ENCODE measurements at regions of chr10 and their contacts with region 1.

Region 1: GRCh38 chr10:71713135-71714030 is 6.2 kb downstream of the C10orf105 start:
- DNase-seq: peak in 2 of 9 donors; percentile 40 to 41
- ATAC-seq: peak; percentile 47
- H3K4me3 ChIP-seq: peak overlapping the region; percentile 9
- H3K4me3 Mint-ChIP-seq: peak overlapping the region; percentile 73 to 86 (median 81)
- H3K27ac ChIP-seq: peak overlapping the region; percentile 91
- H3K27ac Mint-ChIP-seq: peak overlapping the region; percentile 97 to 100 (median 98)
- H3K4me1 ChIP-seq: peaks cover 45 to 63% of the 10 kb centered on the region in 2 donors
- H3K4me1 Mint-ChIP-seq: peaks cover 41 to 86% (median 73%) of the 10 kb centered on the region in 7 donors
- H3K27me3 ChIP-seq: no peaks in the 10 kb centered on the region
- H3K27me3 Mint-ChIP-seq: no peaks in the 10 kb centered on the region

Region 2: GRCh38 chr10:70832852-70833528 is 880.4 kb before region 1 on chr10:
- CTCF ChIA-PET with region 1: no interaction called
- POLR2A ChIA-PET with region 1: no interaction called
- intact Hi-C with region 1: no loop called
- DNase-seq: no peak
- ATAC-seq: peak; percentile 60
- H3K4me3 ChIP-seq: no peak overlapping the region
- H3K4me3 Mint-ChIP-seq: no peak overlapping the region
- H3K27ac ChIP-seq: no peak overlapping the region
- H3K27ac Mint-ChIP-seq: no peak overlapping the region
- H3K4me1 ChIP-seq: no peaks in the 10 kb centered on the region
- H3K4me1 Mint-ChIP-seq: peaks cover 5 to 26% (median 17%) of the 10 kb centered on the region in 7 donors
- H3K27me3 ChIP-seq: no peaks in the 10 kb centered on the region
- H3K27me3 Mint-ChIP-seq: no peaks in the 10 kb centered on the region

Region 3: DNA sequence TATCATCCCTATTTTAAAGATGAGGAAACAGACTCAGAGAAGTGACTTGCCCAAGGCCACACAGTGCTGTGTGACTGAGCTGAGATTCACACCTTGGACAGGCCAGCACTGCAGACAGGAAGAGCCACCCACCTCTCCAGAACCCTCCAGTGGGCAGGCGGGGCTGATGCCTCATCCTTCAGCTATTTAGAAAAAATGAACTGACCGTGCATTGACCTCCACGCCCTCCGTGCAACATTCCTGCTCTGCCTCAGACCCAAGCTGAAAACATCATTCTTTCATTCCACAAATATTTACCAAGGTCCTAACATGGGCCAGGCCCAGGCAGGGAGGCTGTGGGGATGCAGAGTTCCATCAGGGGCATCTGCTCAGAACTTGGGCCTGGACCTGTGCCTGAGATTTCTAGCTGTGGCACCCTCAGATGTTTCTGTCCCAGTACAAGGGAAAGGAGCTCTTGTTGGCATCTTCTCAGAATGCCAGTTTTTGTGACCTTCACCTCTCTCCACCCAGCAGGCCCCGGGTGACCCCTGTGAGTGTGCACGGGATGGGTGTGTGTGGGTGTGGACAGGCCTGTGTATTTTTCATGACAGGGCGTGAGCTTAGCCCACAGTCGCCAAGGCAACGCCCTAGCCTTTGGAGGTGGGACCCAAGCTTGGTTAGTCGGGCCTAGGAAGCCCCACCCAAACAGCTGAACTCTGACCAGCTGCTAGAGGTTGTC is 53.5 kb after region 1 on chr10:
- CTCF ChIA-PET with region 1: interaction called, 38 read pairs
- POLR2A ChIA-PET with region 1: interaction called, 54 read pairs
- intact Hi-C with region 1: no loop called
- DNase-seq: no peak
- ATAC-seq: peak; percentile 36
- H3K4me3 ChIP-seq: no peak overlapping the region
- H3K4me3 Mint-ChIP-seq: peak overlapping the region; percentile 25 to 98 (median 71)
- H3K27ac ChIP-seq: peak overlapping the region; percentile 93
- H3K27ac Mint-ChIP-seq: peak overlapping the region; percentile 89 to 98 (median 95)
- H3K4me1 ChIP-seq: peaks cover 89 to 90% of the 10 kb centered on the region in 2 donors
- H3K4me1 Mint-ChIP-seq: peaks cover 71 to 96% (median 91%) of the 10 kb centered on the region in 7 donors
- H3K27me3 ChIP-seq: no peaks in the 10 kb centered on the region
- H3K27me3 Mint-ChIP-seq: no peaks in the 10 kb centered on the region

Region 4: DNA sequence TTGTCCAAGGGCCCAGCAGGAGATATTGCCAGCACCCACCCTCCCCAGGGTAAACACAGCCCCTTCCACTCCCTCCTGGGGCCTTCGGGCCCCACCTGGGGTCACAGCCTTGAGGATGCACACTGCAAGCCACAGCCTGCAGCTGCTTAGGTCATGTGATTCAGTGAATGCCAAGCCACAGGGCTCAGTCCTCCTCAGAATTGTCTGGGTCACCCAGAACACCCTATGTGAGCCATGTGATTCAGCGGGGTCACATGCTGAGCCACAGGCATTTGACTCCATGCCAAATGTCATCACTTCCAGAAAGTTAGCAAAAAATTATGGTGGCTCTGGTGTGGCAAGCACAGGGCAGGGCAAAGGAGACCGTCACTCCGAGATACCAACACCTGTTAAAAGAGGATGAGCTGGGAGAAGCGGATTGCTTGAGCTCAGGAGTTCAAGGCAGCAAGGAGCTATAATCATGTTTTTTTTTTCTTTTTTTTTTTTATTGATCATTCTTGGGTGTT is 154.9 kb after region 1 on chr10:
- CTCF ChIA-PET with region 1: no interaction called
- POLR2A ChIA-PET with region 1: no interaction called
- intact Hi-C with region 1: no loop called
- DNase-seq: no peak
- ATAC-seq: peak; percentile 86
- H3K4me3 ChIP-seq: no peak overlapping the region
- H3K4me3 Mint-ChIP-seq: no peak overlapping the region
- H3K27ac ChIP-seq: no peak overlapping the region
- H3K27ac Mint-ChIP-seq: no peak overlapping the region
- H3K4me1 ChIP-seq: no peaks in the 10 kb centered on the region
- H3K4me1 Mint-ChIP-seq: peaks cover 0 to 6% (median 0%) of the 10 kb centered on the region in 7 donors
- H3K27me3 ChIP-seq: no peaks in the 10 kb centered on the region
- H3K27me3 Mint-ChIP-seq: no peaks in the 10 kb centered on the region

Measured in naive thymus-derived CD4-positive, alpha-beta T cell (primary cell).